Sigmoid colon (tissue), 7 donors: ENCODE measurements at regions of chr17 and their contacts with region 1.

Region 1: GRCh38 chr17:12730931-12731521 is 58.3 kb upstream of the ARHGAP44 start:
- DNase-seq: peak; percentile 79
- H3K4me3 ChIP-seq: no peak overlapping the region
- H3K27ac ChIP-seq: peak overlapping the region; percentile 20 to 80 (median 70)
- H3K4me1 ChIP-seq: peaks cover 0 to 43% (median 35%) of the 10 kb centered on the region in 4 donors
- H3K27me3 ChIP-seq: no peaks in the 10 kb centered on the region
- CTCF ChIP-seq: no peak
- EP300 ChIP-seq: peak in 1 of 4 donors; percentile 66
- POLR2A ChIP-seq: no peak

Region 2: GRCh38 chr17:12545877-12546513 is 185.0 kb before region 1 on chr17:
- intact Hi-C with region 1: loop called (anchors 10 kb)
- DNase-seq: no peak
- H3K4me3 ChIP-seq: no peak overlapping the region
- H3K27ac ChIP-seq: no peak overlapping the region
- H3K4me1 ChIP-seq: peaks cover 0 to 39% (median 31%) of the 10 kb centered on the region in 4 donors
- H3K27me3 ChIP-seq: no peaks in the 10 kb centered on the region
- CTCF ChIP-seq: peak; percentile 12 to 63 (median 60)
- EP300 ChIP-seq: no peak
- POLR2A ChIP-seq: no peak

Region 3: GRCh38 chr17:12680407-12680897 is 50.6 kb before region 1 on chr17:
- intact Hi-C with region 1: loop called (anchors 5 kb)
- DNase-seq: peak; percentile 83
- H3K4me3 ChIP-seq: peak overlapping the region in 3 of 4 donors; percentile 15 to 39 (median 23)
- H3K27ac ChIP-seq: peak overlapping the region; percentile 78 to 88 (median 81)
- H3K4me1 ChIP-seq: peaks cover 0 to 88% (median 69%) of the 10 kb centered on the region in 4 donors
- H3K27me3 ChIP-seq: no peaks in the 10 kb centered on the region
- CTCF ChIP-seq: no peak
- EP300 ChIP-seq: peak in 2 of 4 donors; percentile 35 to 42
- POLR2A ChIP-seq: no peak